ENCODE measurements at regions of chr10 and their contacts with region 1.

Region 1: DNA sequence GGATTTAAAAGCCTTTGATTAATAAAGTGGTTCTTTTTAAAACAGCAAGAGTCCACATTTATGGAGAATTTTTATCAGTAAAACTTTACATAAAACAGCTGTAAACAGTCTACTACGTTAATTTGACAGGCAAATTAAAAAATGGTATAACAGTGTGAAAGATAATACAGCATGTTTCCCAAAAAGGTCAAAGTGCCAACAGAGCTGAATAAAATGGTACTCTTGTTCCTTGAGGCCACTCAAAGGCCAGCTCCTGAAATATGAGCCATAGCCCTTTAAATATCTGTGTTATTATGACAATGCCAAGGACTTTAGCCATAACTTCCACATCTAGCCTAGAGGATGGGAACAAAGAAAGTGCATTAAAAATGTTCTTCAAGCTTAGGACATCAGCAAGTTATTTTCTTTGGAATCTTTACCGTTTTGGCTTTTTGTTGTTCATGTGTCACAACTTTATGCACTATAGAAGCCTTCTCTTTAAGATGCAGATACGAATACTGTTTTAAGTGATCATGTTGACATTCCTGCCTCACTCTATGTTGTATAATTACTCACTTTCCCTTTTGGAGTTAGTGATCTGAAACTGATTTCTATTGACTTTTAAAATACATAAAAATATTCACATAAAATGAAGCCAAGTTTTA is 165.6 kb downstream of the RNLS start:
- DNase-seq: no peak
- ATAC-seq: no peak
- H3K4me3 ChIP-seq: no peak overlapping the region
- H3K27ac ChIP-seq: no peak overlapping the region
- H3K4me1 ChIP-seq: peaks cover 0 to 16% (median 2%) of the 10 kb centered on the region in 12 donors
- H3K27me3 ChIP-seq: no peaks in the 10 kb centered on the region
- CTCF ChIP-seq: no peak
- POLR2A ChIP-seq: no peak

Region 2: GRCh38 chr10:88095223-88095721 is 322.2 kb before region 1 on chr10:
- intact Hi-C with region 1: no loop called
- DNase-seq: no peak
- ATAC-seq: no peak
- H3K4me3 ChIP-seq: no peak overlapping the region
- H3K27ac ChIP-seq: no peak overlapping the region
- H3K4me1 ChIP-seq: peaks cover 0 to 34% (median 8%) of the 10 kb centered on the region in 12 donors
- H3K27me3 ChIP-seq: no peaks in the 10 kb centered on the region
- CTCF ChIP-seq: no peak
- POLR2A ChIP-seq: no peak

Region 3: DNA sequence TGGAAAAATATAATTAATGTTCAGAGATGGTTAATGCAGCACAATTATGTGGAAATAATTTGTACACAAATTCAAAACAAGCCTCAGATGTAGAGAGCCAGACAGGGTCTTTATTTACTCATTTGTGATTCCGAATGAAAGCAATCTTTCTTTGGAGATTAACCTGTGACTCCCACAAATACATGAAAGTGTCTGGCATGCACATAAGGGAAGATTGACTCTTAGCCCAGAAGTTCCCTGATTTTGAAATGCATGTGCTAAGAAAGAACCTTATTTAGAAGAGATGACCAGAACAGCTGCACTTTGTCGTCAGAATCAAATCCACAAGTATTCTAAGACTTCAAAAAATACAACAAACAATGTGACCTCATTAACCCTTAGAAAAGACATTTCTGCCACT is 120.5 kb after region 1 on chr10:
- intact Hi-C with region 1: loop called in 2 of 10 experiments (anchors 5 to 10 kb)
- DNase-seq: no peak
- ATAC-seq: peak in 2 of 4 donors; percentile 35 to 48
- H3K4me3 ChIP-seq: no peak overlapping the region
- H3K27ac ChIP-seq: peak overlapping the region in 6 of 12 donors; percentile 6 to 59 (median 22)
- H3K4me1 ChIP-seq: peaks cover 0 to 23% (median 1%) of the 10 kb centered on the region in 12 donors
- H3K27me3 ChIP-seq: no peaks in the 10 kb centered on the region
- CTCF ChIP-seq: no peak
- POLR2A ChIP-seq: no peak